ENCODE measurements at regions of chr3 and their contacts with region 1.

Region 1: DNA sequence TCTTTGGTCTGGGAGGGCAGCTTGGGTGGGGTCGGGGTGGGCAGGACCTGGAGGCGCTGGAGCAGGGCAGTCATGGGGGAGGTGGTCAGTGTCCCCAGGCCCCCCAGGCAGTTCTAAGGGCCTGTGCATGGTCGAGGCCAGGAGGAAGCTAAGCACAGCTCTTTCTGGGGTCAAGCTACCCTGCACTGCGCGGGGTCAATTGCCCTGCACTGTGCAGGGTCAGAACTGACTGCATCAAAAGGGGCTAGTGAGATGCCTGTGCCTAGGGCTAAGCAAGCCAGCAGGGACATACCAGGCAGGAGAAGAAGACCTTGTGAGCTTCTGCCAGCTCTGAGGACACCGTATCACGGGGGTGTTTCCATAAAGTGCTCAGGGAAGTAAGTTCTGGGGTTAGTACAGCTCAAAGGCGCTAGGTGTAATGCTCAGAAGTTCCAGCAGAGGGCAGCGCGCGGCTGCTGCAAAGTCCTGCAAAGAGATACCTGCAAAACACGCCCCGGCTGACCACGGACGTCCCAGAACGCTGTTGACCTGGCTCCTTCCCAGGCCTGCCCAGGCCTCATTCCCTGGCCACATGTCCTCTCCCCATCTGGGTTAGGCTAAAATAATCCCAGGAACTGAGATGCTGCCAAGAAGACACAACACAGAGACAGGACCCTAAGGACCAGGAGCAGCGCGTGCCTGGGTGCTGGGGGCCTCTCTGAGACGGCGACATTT is 18.8 kb upstream of the IQSEC1 start:
- DNase-seq: peak; percentile 33
- H3K4me3 ChIP-seq: no peak overlapping the region
- H3K27ac ChIP-seq: no peak overlapping the region
- H3K27me3 ChIP-seq: peaks cover 14% of the 10 kb centered on the region
- CTCF ChIP-seq: peak; percentile 91

Region 2: DNA sequence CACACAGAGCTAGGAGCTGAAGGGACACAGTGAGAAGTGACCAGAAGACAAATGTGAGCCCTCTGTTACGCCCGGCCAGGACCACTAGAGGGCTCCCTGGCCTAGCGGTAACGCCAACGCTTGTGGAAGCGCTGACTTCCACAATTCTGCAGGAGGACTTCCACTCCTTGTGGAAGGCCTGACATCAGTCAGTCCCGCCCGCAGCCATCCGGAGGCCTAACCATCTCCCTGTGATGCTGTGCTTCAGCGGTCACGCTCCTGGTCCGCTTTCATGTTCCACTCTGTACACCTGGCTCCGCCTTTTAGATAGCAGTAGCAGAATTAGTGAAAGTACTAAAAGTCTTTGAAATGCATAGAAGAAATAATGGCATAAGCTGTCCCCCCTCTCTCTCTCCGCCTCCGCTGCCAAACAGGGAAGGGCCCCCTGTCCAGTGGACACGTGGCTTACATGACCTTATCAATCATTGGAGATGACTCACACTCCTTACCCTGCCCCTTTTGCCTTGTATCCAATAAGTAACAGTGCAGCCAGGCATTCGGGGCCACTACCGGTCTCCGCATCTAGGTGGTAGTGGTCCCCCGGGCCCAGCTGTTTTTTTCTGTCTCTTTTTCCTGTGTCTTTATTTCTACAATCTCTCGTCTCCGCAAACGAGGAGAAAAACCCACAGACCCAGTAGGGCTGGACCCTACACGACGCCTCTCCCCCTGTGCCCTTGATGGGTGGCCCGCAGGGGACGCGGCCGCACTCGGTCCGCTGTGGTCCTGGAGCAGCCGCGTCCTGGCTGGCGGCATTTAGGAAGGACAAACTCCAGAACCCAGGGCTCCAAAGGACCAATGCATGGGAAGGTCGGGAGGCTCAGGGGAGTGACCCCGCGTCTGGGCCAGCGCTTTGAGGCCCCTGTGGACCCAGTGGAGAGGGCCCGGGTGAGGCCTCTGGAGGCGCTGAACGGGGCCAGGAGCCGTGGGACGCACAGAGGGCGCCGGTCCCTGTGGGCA is 223.7 kb before region 1 on chr3:
- CTCF ChIA-PET with region 1: no interaction called
- POLR2A ChIA-PET with region 1: no interaction called
- DNase-seq: peak; percentile 61
- H3K4me3 ChIP-seq: 0 out of 2 replicates have a peak overlapping the region, but pooled peaks have one; percentile 13
- H3K27ac ChIP-seq: no peak overlapping the region
- H3K27me3 ChIP-seq: peaks cover 42% of the 10 kb centered on the region
- CTCF ChIP-seq: peak; percentile 95

Region 3: GRCh38 chr3:13075318-13075717 is 16.7 kb before region 1 on chr3:
- CTCF ChIA-PET with region 1: interaction called, 33 read pairs
- POLR2A ChIA-PET with region 1: no interaction called
- DNase-seq: no peak
- H3K4me3 ChIP-seq: no peak overlapping the region
- H3K27ac ChIP-seq: no peak overlapping the region
- H3K27me3 ChIP-seq: peaks cover 64% of the 10 kb centered on the region
- CTCF ChIP-seq: no peak

Region 4: GRCh38 chr3:13110678-13111116 is 18.6 kb after region 1 on chr3:
- CTCF ChIA-PET with region 1: interaction called, 13 read pairs
- POLR2A ChIA-PET with region 1: no interaction called
- DNase-seq: no peak
- H3K4me3 ChIP-seq: no peak overlapping the region
- H3K27ac ChIP-seq: no peak overlapping the region
- H3K27me3 ChIP-seq: peaks cover 13% of the 10 kb centered on the region
- CTCF ChIP-seq: no peak

Region 5: GRCh38 chr3:13461169-13462158 is 369.4 kb after region 1 on chr3:
- CTCF ChIA-PET with region 1: interaction called, 16 read pairs
- POLR2A ChIA-PET with region 1: no interaction called
- DNase-seq: no peak
- H3K4me3 ChIP-seq: no peak overlapping the region
- H3K27ac ChIP-seq: no peak overlapping the region
- H3K27me3 ChIP-seq: peaks cover 15% of the 10 kb centered on the region
- CTCF ChIP-seq: peak; percentile 52

Region 6: DNA sequence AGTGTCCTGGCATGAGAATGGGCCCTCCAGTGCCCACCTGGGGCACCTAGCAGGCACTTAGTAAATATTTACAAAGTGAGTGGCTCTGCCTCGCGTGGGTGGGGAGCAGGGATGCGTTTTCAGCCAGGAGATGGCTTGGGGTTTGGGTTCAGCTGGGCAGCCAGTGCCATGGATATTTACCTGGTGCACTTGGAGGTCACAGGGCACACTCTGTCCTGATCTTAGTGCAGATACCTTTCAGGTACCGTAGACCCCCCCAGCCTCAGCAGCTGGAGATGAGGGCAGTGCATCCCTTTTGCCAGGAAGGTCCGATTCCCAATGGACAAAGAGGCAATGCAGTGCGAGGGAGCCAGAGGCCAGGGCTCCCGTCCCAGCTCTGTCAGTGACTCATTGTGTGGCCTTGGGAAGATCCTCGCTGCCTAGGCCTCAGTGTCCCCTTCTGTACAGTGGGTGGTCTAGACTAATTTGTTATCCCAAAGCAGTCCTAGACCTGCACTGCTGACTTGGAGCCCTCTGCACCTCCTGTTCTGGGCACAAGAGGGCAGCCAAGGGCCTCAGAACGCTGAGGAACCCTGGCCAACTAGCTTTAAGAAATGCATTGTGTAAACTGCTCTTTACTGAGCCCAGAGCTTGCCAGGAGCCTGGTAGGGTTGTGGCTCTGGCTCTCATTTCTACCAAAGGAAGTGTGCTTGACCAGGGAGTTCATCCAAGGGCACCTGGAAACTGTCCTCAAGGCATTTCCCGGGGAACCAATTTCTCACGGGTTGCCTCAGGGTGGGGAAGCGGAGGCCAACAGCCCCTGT is 404.1 kb after region 1 on chr3:
- CTCF ChIA-PET with region 1: interaction called, 12 read pairs
- POLR2A ChIA-PET with region 1: no interaction called
- DNase-seq: peak; percentile 69
- H3K4me3 ChIP-seq: no peak overlapping the region
- H3K27ac ChIP-seq: no peak overlapping the region
- H3K27me3 ChIP-seq: no peaks in the 10 kb centered on the region
- CTCF ChIP-seq: peak; percentile 99